ENCODE measurements at regions of chr18 and their contacts with region 1.

Region 1: DNA sequence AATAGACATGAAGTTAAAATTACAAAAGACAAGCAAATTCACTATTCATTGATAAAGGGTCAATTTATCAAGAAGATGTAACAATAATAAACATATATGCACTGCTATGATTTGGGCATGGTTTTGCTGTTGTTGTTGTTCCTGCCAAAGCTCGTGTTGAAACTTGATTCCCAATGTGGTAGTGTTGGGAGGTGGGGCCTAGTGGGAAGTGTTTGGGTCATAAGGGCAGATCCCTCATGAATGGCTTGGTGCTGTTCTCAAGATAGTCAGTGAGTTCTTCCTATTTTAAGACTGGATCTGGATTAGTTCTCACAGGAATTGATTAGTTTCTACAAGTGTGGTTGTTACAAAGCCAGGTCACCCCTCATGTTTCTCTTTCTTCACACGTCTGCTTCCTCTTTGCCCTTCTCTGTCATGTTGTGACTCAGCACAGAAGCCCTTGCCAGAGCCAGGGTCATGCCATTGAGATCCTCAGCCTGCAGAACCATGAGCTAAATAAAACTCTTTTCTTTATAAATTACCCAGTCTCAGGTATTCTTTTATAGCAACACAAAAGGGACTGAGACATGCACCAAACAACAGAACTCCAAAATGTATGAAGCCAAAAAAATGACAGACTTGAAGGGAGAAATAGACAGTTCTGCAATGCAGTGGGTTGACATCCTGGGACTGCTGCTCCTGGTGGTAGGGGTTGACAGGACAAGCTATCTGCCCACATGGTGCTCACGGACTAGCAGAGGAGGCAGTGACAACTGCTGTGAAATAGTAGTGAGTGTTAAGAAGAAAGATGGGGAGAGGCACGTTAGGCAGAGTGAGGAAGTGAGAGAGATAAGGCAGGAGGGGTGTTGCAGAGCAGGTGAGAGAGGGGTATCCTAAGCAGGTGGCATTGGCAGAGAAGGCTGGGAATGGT is 18.6 kb upstream of the SKA1 start:
- DNase-seq: peak; percentile 28
- ATAC-seq: no peak
- H3K4me3 Mint-ChIP-seq: no peak overlapping the region
- H3K27ac Mint-ChIP-seq: peak overlapping the region; percentile 51
- H3K4me1 Mint-ChIP-seq: peaks cover 17% of the 10 kb centered on the region
- H3K27me3 Mint-ChIP-seq: peaks cover 38% of the 10 kb centered on the region

Region 2: GRCh38 chr18:50194631-50195532 is 161.4 kb before region 1 on chr18 and contains the start of gene MYO5B:
- CTCF ChIA-PET with region 1: interaction called, 24 read pairs
- POLR2A ChIA-PET with region 1: no interaction called
- DNase-seq: peak; percentile 48
- ATAC-seq: peak; percentile 92
- H3K4me3 Mint-ChIP-seq: peak within 1 kb of the TSS; percentile 29
- H3K27ac Mint-ChIP-seq: no peak within 1 kb of the TSS
- H3K4me1 Mint-ChIP-seq: peaks cover 6% of the 10 kb centered on the region
- H3K27me3 Mint-ChIP-seq: peaks cover 63% of the 10 kb centered on the region
- total RNA-seq, gene MYO5B: not detected

Region 3: DNA sequence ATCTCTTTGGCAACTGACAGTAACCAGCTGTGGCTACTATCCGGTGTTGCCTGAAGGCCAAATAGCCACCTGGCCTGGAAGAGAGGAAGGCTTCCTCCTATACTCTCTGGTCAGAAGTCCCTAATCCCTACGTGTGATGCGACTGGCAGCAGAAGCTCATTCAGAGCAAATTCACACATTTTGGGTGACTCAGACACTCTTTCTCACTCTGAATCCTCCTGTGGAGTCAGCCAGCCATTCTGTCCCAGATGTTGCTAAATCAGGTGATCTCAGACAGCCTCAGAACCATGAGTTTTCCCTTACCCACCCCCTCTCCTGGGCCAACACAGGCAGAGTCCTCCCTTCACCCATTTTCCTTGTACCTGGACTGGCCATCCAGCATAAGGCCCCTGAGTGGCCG is 124.7 kb before region 1 on chr18:
- CTCF ChIA-PET with region 1: interaction called, 11 read pairs
- POLR2A ChIA-PET with region 1: no interaction called
- DNase-seq: no peak
- ATAC-seq: no peak
- H3K4me3 Mint-ChIP-seq: no peak overlapping the region
- H3K27ac Mint-ChIP-seq: no peak overlapping the region
- H3K4me1 Mint-ChIP-seq: no peaks in the 10 kb centered on the region
- H3K27me3 Mint-ChIP-seq: peaks cover 15% of the 10 kb centered on the region

Region 4: GRCh38 chr18:50287441-50288347 is 68.6 kb before region 1 on chr18 and contains the start of gene CXXC1:
- CTCF ChIA-PET with region 1: interaction called, 47 read pairs
- POLR2A ChIA-PET with region 1: no interaction called
- DNase-seq: peak; percentile 98
- ATAC-seq: peak; percentile 93
- H3K4me3 Mint-ChIP-seq: peak within 1 kb of the TSS; percentile 100
- H3K27ac Mint-ChIP-seq: peak within 1 kb of the TSS; percentile 99
- H3K4me1 Mint-ChIP-seq: peaks cover 47% of the 10 kb centered on the region
- H3K27me3 Mint-ChIP-seq: no peaks in the 10 kb centered on the region
- total RNA-seq, gene CXXC1: 136 to 158 TPM

Region 5: GRCh38 chr18:50320719-50321118 is 35.6 kb before region 1 on chr18:
- CTCF ChIA-PET with region 1: interaction called, 15 read pairs
- POLR2A ChIA-PET with region 1: no interaction called
- DNase-seq: no peak
- ATAC-seq: peak; percentile 74
- H3K4me3 Mint-ChIP-seq: peak overlapping the region; percentile 67
- H3K27ac Mint-ChIP-seq: peak overlapping the region; percentile 85
- H3K4me1 Mint-ChIP-seq: peaks cover 29% of the 10 kb centered on the region
- H3K27me3 Mint-ChIP-seq: peaks cover 3% of the 10 kb centered on the region

Region 6: GRCh38 chr18:50374753-50375391 is 18.6 kb after region 1 on chr18 and contains the start of gene SKA1:
- CTCF ChIA-PET with region 1: interaction called, 18 read pairs
- POLR2A ChIA-PET with region 1: interaction called, 5 read pairs
- DNase-seq: peak; percentile 94
- ATAC-seq: peak; percentile 99
- H3K4me3 Mint-ChIP-seq: peak within 1 kb of the TSS; percentile 93
- H3K27ac Mint-ChIP-seq: peak within 1 kb of the TSS; percentile 92
- H3K4me1 Mint-ChIP-seq: peaks cover 28% of the 10 kb centered on the region
- H3K27me3 Mint-ChIP-seq: peaks cover 5% of the 10 kb centered on the region
- total RNA-seq, gene SKA1: 46.3 to 48.9 TPM

Region 7: GRCh38 chr18:50422286-50422898 is 66.1 kb after region 1 on chr18:
- CTCF ChIA-PET with region 1: no interaction called
- POLR2A ChIA-PET with region 1: no interaction called
- DNase-seq: no peak
- ATAC-seq: no peak
- H3K4me3 Mint-ChIP-seq: no peak overlapping the region
- H3K27ac Mint-ChIP-seq: no peak overlapping the region
- H3K4me1 Mint-ChIP-seq: no peaks in the 10 kb centered on the region
- H3K27me3 Mint-ChIP-seq: peaks cover 12% of the 10 kb centered on the region

Region 8: GRCh38 chr18:50886929-50887328 is 530.6 kb after region 1 on chr18:
- CTCF ChIA-PET with region 1: no interaction called
- POLR2A ChIA-PET with region 1: no interaction called
- DNase-seq: no peak
- ATAC-seq: no peak
- H3K4me3 Mint-ChIP-seq: no peak overlapping the region
- H3K27ac Mint-ChIP-seq: no peak overlapping the region
- H3K4me1 Mint-ChIP-seq: peaks cover 15% of the 10 kb centered on the region
- H3K27me3 Mint-ChIP-seq: no peaks in the 10 kb centered on the region